Activated CD4-positive, alpha-beta T cell treated with anti-CD3 and anti-CD28 coated beads for 36 hours (primary cell): ENCODE measurements at regions of chr1 and their contacts with region 1.

Region 1: DNA sequence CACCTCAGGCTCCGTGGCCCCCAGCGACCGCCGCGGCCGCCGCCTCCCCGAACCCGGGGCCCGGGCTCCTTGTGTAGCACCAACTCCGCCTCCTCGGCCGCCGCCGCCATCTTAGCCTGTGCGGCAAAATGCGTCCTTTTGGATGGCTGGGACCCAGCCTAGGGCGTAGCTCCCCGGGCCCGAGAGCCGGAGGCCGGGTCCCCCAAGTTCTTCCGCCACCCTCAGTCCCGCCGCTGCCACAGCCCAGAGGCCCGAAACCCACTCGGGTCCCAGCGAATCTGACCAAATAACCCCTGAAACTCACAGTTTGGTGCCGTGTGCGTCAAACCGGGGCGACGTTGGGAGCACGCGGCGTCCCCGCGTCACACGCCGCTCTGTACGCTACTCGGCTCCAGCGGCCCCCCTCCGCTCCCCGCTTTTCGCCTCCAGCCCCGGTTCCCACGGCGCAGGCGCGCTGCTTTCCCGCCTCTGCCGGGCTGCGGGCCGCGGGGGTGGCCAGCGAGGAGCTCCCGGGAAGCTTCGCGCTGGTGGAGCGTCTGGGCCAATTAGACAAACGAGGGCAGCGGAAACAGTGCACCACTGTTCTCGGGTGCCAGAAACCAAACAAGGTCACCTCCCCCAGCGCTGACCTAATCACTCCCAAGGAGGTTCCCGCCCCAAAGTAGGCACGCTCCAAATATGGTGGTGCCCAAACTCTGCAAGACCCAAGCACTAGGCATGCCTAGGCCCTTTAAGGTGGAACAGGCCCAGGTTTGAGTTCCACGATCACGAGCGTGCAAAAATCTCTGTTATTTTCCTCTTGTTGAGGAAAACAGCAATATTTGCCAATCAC is at the start of gene ZNF644:
- DNase-seq: peak; percentile 95
- ATAC-seq: peak; percentile 90
- H3K4me3 Mint-ChIP-seq: peak within 1 kb of the TSS; percentile 94
- H3K27ac Mint-ChIP-seq: peak within 1 kb of the TSS; percentile 97
- H3K4me1 Mint-ChIP-seq: peaks cover 62% of the 10 kb centered on the region
- H3K27me3 Mint-ChIP-seq: no peaks in the 10 kb centered on the region
- total RNA-seq, gene ZNF644: 36.8 to 46.0 TPM

Region 2: GRCh38 chr1:89547563-89548485 is 1474.1 kb before region 1 on chr1:
- CTCF ChIA-PET with region 1: no interaction called
- POLR2A ChIA-PET with region 1: no interaction called
- intact Hi-C with region 1: no loop called
- DNase-seq: peak; percentile 70
- ATAC-seq: peak; percentile 48
- H3K4me3 Mint-ChIP-seq: peak overlapping the region; percentile 20
- H3K27ac Mint-ChIP-seq: peak overlapping the region; percentile 95
- H3K4me1 Mint-ChIP-seq: peaks cover 86% of the 10 kb centered on the region
- H3K27me3 Mint-ChIP-seq: no peaks in the 10 kb centered on the region

Region 3: GRCh38 chr1:89994805-89995597 is 1026.9 kb before region 1 on chr1 and contains the start of gene ZNF326:
- CTCF ChIA-PET with region 1: no interaction called
- POLR2A ChIA-PET with region 1: no interaction called
- intact Hi-C with region 1: loop called in 1 of 2 experiments (anchors 5 kb)
- DNase-seq: peak; percentile 97
- ATAC-seq: peak; percentile 95
- H3K4me3 Mint-ChIP-seq: peak within 1 kb of the TSS; percentile 94
- H3K27ac Mint-ChIP-seq: peak within 1 kb of the TSS; percentile 92
- H3K4me1 Mint-ChIP-seq: peaks cover 42% of the 10 kb centered on the region
- H3K27me3 Mint-ChIP-seq: no peaks in the 10 kb centered on the region
- total RNA-seq, gene ZNF326: 19.4 to 20.5 TPM

Region 4: DNA sequence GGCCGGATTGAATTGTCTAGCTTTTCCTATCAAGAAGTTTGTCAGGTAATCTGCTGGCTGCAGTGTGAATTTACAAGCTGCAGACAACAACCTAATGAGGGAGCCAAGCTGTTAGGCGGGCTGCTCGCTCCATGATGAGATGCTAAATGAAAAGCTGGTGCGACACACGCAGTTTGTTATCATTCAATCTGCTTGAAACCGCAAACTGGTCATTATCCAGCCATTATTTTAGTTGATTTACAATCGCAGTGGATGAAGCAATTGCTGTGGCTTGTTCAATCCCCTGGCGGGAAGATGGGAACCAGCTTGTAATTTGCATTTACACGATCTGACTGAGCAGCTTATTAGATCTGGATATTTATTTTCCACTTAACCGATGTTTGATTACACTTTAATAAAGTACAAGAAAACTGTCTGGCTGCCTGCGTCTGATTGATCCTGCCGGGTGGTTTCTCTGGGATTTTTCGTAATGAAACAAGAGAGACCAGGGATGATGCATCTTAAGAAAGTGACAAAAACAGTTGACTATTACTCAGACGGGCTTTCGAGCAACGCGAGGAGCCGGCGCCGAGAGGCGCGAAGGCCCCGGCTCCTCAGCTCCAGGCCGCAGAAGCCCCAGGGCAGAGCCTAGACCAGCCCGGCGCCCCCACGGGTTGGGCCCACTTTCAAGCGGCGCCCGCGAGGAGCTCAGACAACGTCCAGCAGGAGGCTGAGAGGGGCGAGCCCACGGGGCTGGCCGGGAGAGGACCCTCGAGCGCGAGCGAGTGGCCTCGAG is 186.8 kb before region 1 on chr1:
- CTCF ChIA-PET with region 1: no interaction called
- POLR2A ChIA-PET with region 1: no interaction called
- intact Hi-C with region 1: loop called in 1 of 2 experiments (anchors 5 kb)
- DNase-seq: peak; percentile 60
- ATAC-seq: peak; percentile 87
- H3K4me3 Mint-ChIP-seq: no peak overlapping the region
- H3K27ac Mint-ChIP-seq: no peak overlapping the region
- H3K4me1 Mint-ChIP-seq: peaks cover 23% of the 10 kb centered on the region
- H3K27me3 Mint-ChIP-seq: peaks cover 75% of the 10 kb centered on the region

Region 5: DNA sequence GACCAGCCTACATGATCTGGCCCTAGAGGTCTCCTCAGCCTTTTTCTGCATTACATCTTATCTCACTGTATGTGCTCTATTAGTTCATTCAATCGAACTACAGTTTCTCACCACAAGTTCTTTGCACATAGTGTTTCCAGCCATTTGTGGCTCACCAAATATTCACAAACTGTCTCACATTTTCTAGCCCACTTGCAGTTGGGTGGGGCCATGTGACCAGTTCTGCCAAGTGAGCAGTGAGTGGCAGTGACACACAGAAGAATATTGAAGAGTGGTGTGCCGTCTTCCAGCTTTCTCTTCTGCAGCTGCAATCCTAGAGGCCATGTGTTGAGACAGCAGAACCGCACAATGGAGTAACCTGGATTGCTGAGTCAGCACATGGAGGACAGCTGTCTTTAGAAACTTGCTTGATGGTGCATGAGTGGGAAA is 103.1 kb after region 1 on chr1:
- CTCF ChIA-PET with region 1: no interaction called
- POLR2A ChIA-PET with region 1: no interaction called
- intact Hi-C with region 1: loop called in 1 of 2 experiments (anchors 2 kb)
- DNase-seq: peak; percentile 66
- ATAC-seq: peak; percentile 82
- H3K4me3 Mint-ChIP-seq: peak overlapping the region; percentile 5
- H3K27ac Mint-ChIP-seq: peak overlapping the region; percentile 76
- H3K4me1 Mint-ChIP-seq: peaks cover 21% of the 10 kb centered on the region
- H3K27me3 Mint-ChIP-seq: peaks cover 12% of the 10 kb centered on the region

Region 6: DNA sequence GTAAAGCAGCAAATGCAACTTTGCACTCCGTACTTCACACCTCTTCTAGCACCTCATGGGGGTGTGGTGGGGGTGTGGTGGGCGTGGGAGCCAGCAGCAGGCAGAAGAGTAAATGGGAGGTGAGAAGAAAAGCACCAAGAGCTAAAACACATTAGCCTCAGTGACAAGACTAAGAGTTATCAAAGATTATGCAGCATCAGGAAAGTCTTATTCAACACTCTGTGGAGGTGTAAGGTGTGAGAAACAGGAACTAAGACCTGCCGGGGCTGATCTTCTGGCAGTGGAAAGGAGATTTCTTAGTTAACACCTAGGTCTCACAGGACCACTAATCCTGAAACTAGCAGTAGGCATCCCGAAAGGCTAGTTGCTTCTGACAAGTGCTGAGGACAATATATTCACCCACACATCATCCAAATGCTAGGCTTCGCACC is 854.2 kb after region 1 on chr1:
- CTCF ChIA-PET with region 1: no interaction called
- POLR2A ChIA-PET with region 1: no interaction called
- intact Hi-C with region 1: loop called in 1 of 2 experiments (anchors 5 kb)
- DNase-seq: peak; percentile 68
- ATAC-seq: peak; percentile 83
- H3K4me3 Mint-ChIP-seq: no peak overlapping the region
- H3K27ac Mint-ChIP-seq: peak overlapping the region; percentile 29
- H3K4me1 Mint-ChIP-seq: peaks cover 79% of the 10 kb centered on the region
- H3K27me3 Mint-ChIP-seq: no peaks in the 10 kb centered on the region

Region 7: DNA sequence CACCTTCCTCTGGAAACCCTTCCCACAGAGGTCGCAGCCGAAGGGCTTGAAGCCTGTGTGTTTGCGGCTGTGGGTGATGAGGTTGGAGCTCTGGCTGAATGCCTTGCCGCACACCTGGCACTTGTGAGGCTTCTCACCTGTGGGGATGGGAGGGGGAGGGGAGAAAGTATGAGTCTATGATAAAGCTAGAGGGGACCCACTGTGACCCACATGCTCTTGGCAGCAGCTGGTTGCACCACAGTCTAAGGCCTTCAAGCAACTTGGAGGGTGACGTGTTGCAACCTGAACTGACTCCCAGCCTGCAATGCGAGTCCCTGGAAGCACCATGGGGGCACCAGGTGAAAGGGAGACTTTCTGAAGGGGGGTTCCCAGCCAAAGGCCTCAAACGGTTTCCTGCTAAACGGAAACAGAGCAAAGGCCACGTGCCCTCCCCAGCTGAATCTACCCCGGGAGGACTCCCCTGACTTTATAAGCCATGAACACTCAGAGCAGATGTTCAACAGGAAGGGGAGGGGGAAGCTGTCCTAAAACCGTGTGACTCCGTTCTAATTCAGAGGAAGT is 1454.2 kb after region 1 on chr1:
- CTCF ChIA-PET with region 1: no interaction called
- POLR2A ChIA-PET with region 1: no interaction called
- intact Hi-C with region 1: loop called in 1 of 2 experiments (anchors 10 kb)
- DNase-seq: peak; percentile 84
- ATAC-seq: peak; percentile 57
- H3K4me3 Mint-ChIP-seq: peak overlapping the region; percentile 37
- H3K27ac Mint-ChIP-seq: peak overlapping the region; percentile 92
- H3K4me1 Mint-ChIP-seq: peaks cover 85% of the 10 kb centered on the region
- H3K27me3 Mint-ChIP-seq: no peaks in the 10 kb centered on the region